ENCODE measurements at regions of chr3 and their contacts with region 1.

Region 1: DNA sequence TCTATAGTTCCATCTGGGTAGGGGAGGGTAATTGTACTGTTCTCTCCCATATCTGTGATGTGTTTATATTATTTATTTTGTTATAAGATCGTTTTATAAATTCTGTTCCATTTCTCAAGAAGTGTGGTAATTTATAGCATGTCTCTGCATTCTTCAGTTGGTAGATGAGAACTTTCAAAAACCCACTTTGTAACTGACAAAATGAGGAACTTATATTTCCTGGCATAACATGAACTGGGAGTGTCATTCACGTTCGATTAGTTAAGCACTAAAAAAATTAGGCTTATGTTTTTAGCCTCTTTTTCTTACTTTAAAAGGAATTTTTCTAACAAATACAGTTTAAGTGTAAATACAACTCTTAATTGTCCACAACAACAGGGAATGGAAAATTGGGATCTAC is 230.8 kb downstream of the CGGBP1 start:
- DNase-seq: no peak
- H3K4me3 ChIP-seq: no peak overlapping the region
- H3K27ac ChIP-seq: no peak overlapping the region
- H3K4me1 ChIP-seq: no peaks in the 10 kb centered on the region
- H3K27me3 ChIP-seq: no peaks in the 10 kb centered on the region
- CTCF ChIP-seq: no peak

Region 2: GRCh38 chr3:87805670-87806069 is 22.4 kb before region 1 on chr3:
- CTCF ChIA-PET with region 1: no interaction called
- POLR2A ChIA-PET with region 1: interaction called, 12 read pairs
- intact Hi-C with region 1: no loop called
- DNase-seq: no peak
- H3K4me3 ChIP-seq: no peak overlapping the region
- H3K27ac ChIP-seq: no peak overlapping the region
- H3K4me1 ChIP-seq: peaks cover 2% of the 10 kb centered on the region
- H3K27me3 ChIP-seq: no peaks in the 10 kb centered on the region
- CTCF ChIP-seq: no peak

Region 3: GRCh38 chr3:87900061-87900460 is 72.0 kb after region 1 on chr3:
- CTCF ChIA-PET with region 1: no interaction called
- POLR2A ChIA-PET with region 1: no interaction called
- intact Hi-C with region 1: no loop called
- DNase-seq: peak; percentile 18
- H3K4me3 ChIP-seq: no peak overlapping the region
- H3K27ac ChIP-seq: no peak overlapping the region
- H3K4me1 ChIP-seq: peaks cover 9% of the 10 kb centered on the region
- H3K27me3 ChIP-seq: no peaks in the 10 kb centered on the region
- CTCF ChIP-seq: peak; percentile 34; the same call in 1 of the 2 replicates

Region 4: DNA sequence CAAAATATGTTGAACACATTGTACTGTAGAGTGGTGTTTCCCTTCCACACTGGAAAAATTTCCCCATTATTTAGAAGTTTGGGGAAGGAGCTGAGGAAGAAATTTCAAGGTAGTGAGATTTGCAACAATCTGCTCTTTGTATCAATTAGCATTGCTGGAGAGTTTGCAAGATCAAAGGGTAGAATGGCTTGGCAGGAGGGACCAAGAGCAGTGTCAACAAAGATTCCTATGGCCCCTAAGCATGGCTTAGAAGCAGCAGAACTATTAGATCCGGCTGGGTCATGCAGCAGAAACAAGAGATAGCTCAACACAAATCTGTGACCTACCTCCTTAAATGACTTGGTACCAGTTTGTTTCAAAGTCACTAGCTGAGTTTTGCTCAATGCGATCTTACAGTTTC is 496.7 kb after region 1 on chr3:
- CTCF ChIA-PET with region 1: no interaction called
- POLR2A ChIA-PET with region 1: no interaction called
- intact Hi-C with region 1: no loop called
- DNase-seq: no peak
- H3K4me3 ChIP-seq: no peak overlapping the region
- H3K27ac ChIP-seq: no peak overlapping the region
- H3K4me1 ChIP-seq: no peaks in the 10 kb centered on the region
- H3K27me3 ChIP-seq: no peaks in the 10 kb centered on the region
- CTCF ChIP-seq: no peak